ENCODE measurements at regions of chr11 and their contacts with region 1.

Region 1: GRCh38 chr11:66976048-66976467 is 954 bp downstream of the C11orf86 start:
- DNase-seq: peak; percentile 89
- ATAC-seq: peak; percentile 92
- H3K4me3 Mint-ChIP-seq: no peak overlapping the region
- H3K27ac Mint-ChIP-seq: no peak overlapping the region
- H3K4me1 Mint-ChIP-seq: peaks cover 11% of the 10 kb centered on the region
- H3K27me3 Mint-ChIP-seq: no peaks in the 10 kb centered on the region
- CTCF ChIP-seq: peak; percentile 86

Region 2: DNA sequence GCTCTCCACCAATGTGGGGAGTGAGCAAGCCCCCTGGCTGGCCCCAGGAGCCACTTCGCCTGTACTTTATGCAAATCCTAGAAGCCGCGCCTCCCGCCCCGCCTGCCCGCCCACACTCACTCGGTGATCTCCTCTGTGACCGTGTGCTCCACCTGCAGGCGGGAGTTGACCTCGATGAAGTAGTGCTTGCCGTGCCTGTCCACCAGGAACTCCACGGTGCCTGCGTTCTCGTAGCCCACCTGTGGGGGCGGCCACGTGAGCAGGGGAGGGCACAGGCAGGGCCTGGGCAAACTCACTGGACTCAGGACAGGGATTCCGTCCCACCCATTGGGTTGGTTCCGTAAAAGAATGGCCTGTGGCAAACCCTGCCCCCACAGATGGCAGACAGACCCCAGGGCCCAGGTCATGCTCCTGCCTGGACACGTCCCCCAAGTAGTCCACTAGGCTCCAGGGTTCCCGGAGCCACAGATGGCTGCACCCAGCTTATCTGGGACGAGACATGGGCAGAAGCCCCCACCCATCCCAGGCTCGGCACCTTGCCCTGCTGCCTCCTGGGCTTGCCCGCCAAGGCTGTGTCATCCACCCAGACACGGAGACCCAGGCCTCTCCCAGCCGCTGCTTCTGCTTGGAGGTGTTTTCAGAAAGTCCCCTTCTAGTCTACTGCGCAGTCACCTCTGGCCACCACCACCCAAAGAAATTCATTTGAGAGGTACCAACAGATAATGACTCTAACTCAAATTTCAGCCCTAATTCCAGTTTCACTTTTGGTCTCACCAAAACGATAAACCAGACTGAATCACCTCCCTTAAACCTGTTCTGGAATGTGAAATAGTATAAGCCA is 107.1 kb before region 1 on chr11:
- CTCF ChIA-PET with region 1: interaction called, 13 read pairs
- POLR2A ChIA-PET with region 1: no interaction called
- DNase-seq: peak; percentile 93
- ATAC-seq: peak; percentile 91
- H3K4me3 Mint-ChIP-seq: no peak overlapping the region
- H3K27ac Mint-ChIP-seq: peak overlapping the region; percentile 83
- H3K4me1 Mint-ChIP-seq: peaks cover 12% of the 10 kb centered on the region
- H3K27me3 Mint-ChIP-seq: no peaks in the 10 kb centered on the region
- CTCF ChIP-seq: peak; percentile 25; the same call in 1 of the 2 replicates

Region 3: GRCh38 chr11:66915046-66915832 is 60.8 kb before region 1 on chr11:
- CTCF ChIA-PET with region 1: interaction called, 15 read pairs
- POLR2A ChIA-PET with region 1: no interaction called
- DNase-seq: no peak
- ATAC-seq: peak; percentile 78
- H3K4me3 Mint-ChIP-seq: no peak overlapping the region
- H3K27ac Mint-ChIP-seq: no peak overlapping the region
- H3K4me1 Mint-ChIP-seq: peaks cover 40% of the 10 kb centered on the region
- H3K27me3 Mint-ChIP-seq: no peaks in the 10 kb centered on the region; the same call in 1 of the 2 replicates
- CTCF ChIP-seq: no peak

Region 4: GRCh38 chr11:66958232-66958955 is 17.7 kb before region 1 on chr11 and contains the start of gene PC:
- CTCF ChIA-PET with region 1: interaction called, 29 read pairs
- POLR2A ChIA-PET with region 1: interaction called, 9 read pairs
- DNase-seq: peak; percentile 100
- ATAC-seq: peak; percentile 96
- H3K4me3 Mint-ChIP-seq: peak within 1 kb of the TSS; percentile 87
- H3K27ac Mint-ChIP-seq: peak within 1 kb of the TSS; percentile 99
- H3K4me1 Mint-ChIP-seq: peaks cover 26% of the 10 kb centered on the region
- H3K27me3 Mint-ChIP-seq: peaks cover 17% of the 10 kb centered on the region
- CTCF ChIP-seq: no peak
- total RNA-seq, gene PC: 22.1 to 27.2 TPM (median 25.6 TPM) in 3 replicates